Heart left ventricle (tissue), 16 donors: ENCODE measurements at regions of chr13 and their contacts with region 1.

Region 1: GRCh38 chr13:114314074-114314912 is at the start of gene CHAMP1:
- DNase-seq: peak; percentile 96 to 99 (median 97)
- ATAC-seq: peak; percentile 86 to 97 (median 96)
- H3K4me3 ChIP-seq: peak within 1 kb of the TSS; percentile 68 to 95 (median 80)
- H3K27ac ChIP-seq: peak within 1 kb of the TSS; percentile 51 to 97 (median 92)
- H3K4me1 ChIP-seq: peaks cover 2 to 50% (median 33%) of the 10 kb centered on the region in 12 donors
- H3K27me3 ChIP-seq: no peaks in the 10 kb centered on the region
- CTCF ChIP-seq: peak in 1 of 12 donors; percentile 9
- POLR2A ChIP-seq: peak; percentile 8 to 88
- total RNA-seq, gene CHAMP1: 7.0 to 17.5 (median 12.1) TPM

Region 2: DNA sequence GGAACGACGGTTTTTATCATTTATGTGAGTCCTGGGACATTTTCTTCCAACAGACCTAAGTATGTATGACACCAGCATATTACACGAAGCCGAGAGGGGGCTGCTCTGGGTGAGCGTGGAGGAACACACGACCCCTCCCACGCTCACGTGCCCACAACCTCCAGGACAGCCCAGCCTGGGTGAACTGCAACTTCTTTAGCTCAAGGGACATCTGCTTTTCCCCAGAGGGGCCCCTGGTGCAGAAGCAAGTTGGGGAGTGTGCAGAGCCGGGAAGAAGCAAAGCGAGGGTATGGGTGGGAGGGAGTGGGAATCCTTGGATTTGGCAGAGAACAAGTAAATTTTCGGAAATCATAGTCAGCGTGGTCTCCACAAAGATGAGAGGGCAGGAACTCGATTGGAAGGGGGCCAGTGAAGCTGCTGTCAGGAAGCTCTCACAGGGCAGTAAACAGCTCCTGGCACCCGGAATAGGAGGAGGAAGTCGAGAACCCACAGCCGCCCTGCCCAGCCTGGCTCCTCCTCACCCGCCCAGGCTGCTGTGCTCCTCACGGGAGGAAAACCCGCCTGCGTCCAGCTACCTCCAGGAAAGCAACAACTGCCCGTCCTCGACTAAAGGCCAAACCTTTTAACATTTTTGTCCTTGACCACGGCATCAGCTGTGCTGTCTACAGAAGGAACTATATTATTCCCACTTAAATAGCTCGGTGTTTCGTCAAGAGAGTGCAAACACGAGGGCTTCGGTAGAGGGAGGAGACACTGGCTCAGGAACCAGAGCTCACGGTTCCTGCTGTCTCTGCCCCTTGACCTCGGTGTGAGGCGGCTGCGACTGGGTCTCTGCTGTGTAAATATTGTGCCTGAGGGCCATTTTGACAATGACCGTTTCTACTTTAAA is 152.4 kb before region 1 on chr13:
- intact Hi-C with region 1: no loop called
- DNase-seq: peak in 4 of 5 donors; percentile 44 to 63 (median 56)
- ATAC-seq: peak in 3 of 4 donors; percentile 52 to 72 (median 57)
- H3K4me3 ChIP-seq: peak overlapping the region in 2 of 12 donors; percentile 9 to 23
- H3K27ac ChIP-seq: peak overlapping the region in 1 of 12 donors; percentile 63
- H3K4me1 ChIP-seq: peaks cover 0 to 31% (median 6%) of the 10 kb centered on the region in 12 donors
- H3K27me3 ChIP-seq: peaks cover 0 to 19% (median 0%) of the 10 kb centered on the region in 9 donors
- CTCF ChIP-seq: no peak
- POLR2A ChIP-seq: no peak

Region 3: GRCh38 chr13:114281351-114282040 is 32.8 kb before region 1 on chr13 and contains the start of gene UPF3A:
- intact Hi-C with region 1: loop called in 2 of 10 experiments (anchors 1 kb)
- DNase-seq: peak; percentile 92 to 96 (median 93)
- ATAC-seq: peak; percentile 81 to 96 (median 93)
- H3K4me3 ChIP-seq: peak within 1 kb of the TSS; percentile 57 to 93 (median 78)
- H3K27ac ChIP-seq: peak within 1 kb of the TSS; percentile 90 to 99 (median 98)
- H3K4me1 ChIP-seq: peaks cover 0 to 25% (median 14%) of the 10 kb centered on the region in 12 donors
- H3K27me3 ChIP-seq: no peaks in the 10 kb centered on the region
- CTCF ChIP-seq: no peak
- POLR2A ChIP-seq: peak in 1 of 2 donors; percentile 90
- total RNA-seq, gene UPF3A: 13.4 to 25.5 (median 20.3) TPM